ENCODE measurements at regions of chr15 and their contacts with region 1.

Region 1: DNA sequence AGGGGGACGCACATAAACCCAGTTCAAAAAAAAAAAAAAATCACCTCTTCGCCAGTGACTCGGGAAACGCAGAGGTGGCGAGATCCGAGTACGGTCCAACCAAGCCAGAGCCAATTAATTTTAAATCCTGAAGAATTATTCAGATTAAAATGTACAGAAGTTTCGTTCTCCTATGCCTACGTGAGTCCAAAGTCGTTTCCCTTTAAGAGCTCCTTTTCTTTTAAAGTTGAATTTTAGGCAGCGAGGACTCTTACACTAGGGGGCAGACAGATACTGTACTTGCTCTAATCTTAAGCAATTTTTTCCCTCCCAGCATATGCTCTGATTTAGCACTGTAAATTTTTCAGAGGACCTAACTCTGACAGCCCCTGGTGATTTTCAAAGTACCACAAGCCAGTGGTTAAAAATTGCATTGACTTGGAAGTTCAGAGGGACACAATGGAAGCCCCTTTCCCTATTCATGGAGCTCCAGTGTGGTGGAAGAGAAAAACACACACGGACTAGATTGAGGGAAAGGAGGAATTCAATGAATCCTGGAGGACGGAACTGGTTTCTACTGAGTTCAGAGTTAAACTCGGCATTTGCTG is 3.3 kb upstream of the NR2F2 start:
- DNase-seq: no peak
- H3K4me3 ChIP-seq: peak overlapping the region; percentile 77 to 84 (median 80)
- H3K27ac ChIP-seq: peak overlapping the region; percentile 94 to 95 (median 94)
- H3K4me1 ChIP-seq: peaks cover 19 to 46% (median 45%) of the 10 kb centered on the region in 4 donors
- H3K27me3 ChIP-seq: peaks cover 0 to 7% (median 0%) of the 10 kb centered on the region in 4 donors
- CTCF ChIP-seq: peak; percentile 76 to 85 (median 81)
- EP300 ChIP-seq: no peak
- POLR2A ChIP-seq: no peak

Region 2: DNA sequence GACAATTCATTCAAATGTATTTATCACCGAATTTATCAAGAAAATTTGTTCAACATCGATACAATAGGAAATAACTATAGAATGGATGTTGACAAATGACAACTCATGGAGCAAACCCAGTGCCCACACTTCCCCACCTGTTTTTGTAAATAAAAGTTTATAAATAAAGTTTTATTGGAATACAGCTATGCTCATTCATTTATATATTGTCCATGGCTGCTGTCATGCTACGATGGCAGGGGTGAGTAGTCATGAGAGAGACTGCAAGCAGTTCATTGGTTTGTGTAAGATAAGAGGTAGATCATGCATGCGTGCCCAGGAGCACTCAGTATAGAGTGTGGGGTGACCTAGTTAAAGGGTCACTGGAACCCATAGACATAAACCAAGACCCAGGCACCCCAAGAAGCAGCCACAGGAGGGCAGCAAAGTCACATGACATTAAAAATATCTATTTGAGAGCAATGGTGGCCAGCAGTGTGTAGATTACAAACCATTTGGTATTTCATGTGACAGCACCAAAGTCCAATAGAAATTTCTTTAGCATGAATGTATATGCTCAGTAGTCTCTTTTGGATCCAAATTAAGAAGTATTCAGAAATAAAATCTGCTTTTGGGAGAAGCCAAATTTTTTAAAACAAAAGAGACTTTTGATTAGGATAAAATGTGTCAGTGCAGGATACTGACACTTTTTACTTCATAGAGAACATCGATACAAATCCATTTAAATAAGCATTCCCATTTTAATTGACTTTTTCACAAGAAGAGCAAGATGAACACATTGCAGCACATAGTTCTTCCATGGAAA is 1301.1 kb before region 1 on chr15:
- intact Hi-C with region 1: loop called (anchors 10 kb)
- DNase-seq: no peak
- H3K4me3 ChIP-seq: no peak overlapping the region
- H3K27ac ChIP-seq: no peak overlapping the region
- H3K4me1 ChIP-seq: no peaks in the 10 kb centered on the region
- H3K27me3 ChIP-seq: no peaks in the 10 kb centered on the region
- CTCF ChIP-seq: peak; percentile 42 to 58 (median 50)
- EP300 ChIP-seq: no peak
- POLR2A ChIP-seq: no peak

Region 3: GRCh38 chr15:95259513-95259912 is 1067.7 kb before region 1 on chr15:
- intact Hi-C with region 1: loop called (anchors 5 kb)
- DNase-seq: no peak
- H3K4me3 ChIP-seq: no peak overlapping the region
- H3K27ac ChIP-seq: peak overlapping the region in 2 of 4 donors; percentile 14 to 18
- H3K4me1 ChIP-seq: peaks cover 0 to 40% (median 40%) of the 10 kb centered on the region in 4 donors
- H3K27me3 ChIP-seq: no peaks in the 10 kb centered on the region
- CTCF ChIP-seq: peak; percentile 76 to 81 (median 79)
- EP300 ChIP-seq: no peak
- POLR2A ChIP-seq: no peak

Region 4: GRCh38 chr15:95439922-95440376 is 887.3 kb before region 1 on chr15:
- intact Hi-C with region 1: loop called (anchors 10 kb)
- DNase-seq: no peak
- H3K4me3 ChIP-seq: no peak overlapping the region
- H3K27ac ChIP-seq: peak overlapping the region in 3 of 4 donors; percentile 4 to 41 (median 5)
- H3K4me1 ChIP-seq: peaks cover 0 to 24% (median 9%) of the 10 kb centered on the region in 4 donors
- H3K27me3 ChIP-seq: no peaks in the 10 kb centered on the region
- CTCF ChIP-seq: no peak
- EP300 ChIP-seq: no peak
- POLR2A ChIP-seq: no peak

Region 5: GRCh38 chr15:96247621-96248305 is 79.5 kb before region 1 on chr15:
- intact Hi-C with region 1: no loop called
- DNase-seq: no peak
- H3K4me3 ChIP-seq: no peak overlapping the region
- H3K27ac ChIP-seq: no peak overlapping the region
- H3K4me1 ChIP-seq: no peaks in the 10 kb centered on the region
- H3K27me3 ChIP-seq: no peaks in the 10 kb centered on the region
- CTCF ChIP-seq: no peak
- EP300 ChIP-seq: no peak
- POLR2A ChIP-seq: no peak

Region 6: DNA sequence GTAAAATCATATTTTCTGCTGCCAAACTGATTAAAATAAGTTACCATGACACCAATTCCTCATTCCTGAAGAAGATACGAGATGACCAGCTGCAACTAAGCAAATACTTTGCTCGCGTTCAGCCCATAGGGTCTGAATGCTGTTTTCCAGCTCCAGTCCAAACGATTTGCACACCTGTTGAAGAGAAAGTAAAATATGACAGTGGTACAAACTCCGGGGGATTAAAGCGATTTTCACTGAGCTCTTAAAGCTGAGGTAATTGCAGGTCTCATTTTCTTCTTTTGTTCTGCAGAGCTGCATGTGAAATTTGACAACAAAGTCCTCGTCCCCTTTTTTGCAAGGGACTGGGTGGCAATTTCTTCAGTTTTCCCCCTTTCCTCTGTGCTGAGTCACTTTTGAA is 121.7 kb after region 1 on chr15:
- intact Hi-C with region 1: no loop called
- DNase-seq: no peak
- H3K4me3 ChIP-seq: no peak overlapping the region
- H3K27ac ChIP-seq: no peak overlapping the region
- H3K4me1 ChIP-seq: no peaks in the 10 kb centered on the region
- H3K27me3 ChIP-seq: no peaks in the 10 kb centered on the region
- CTCF ChIP-seq: no peak
- EP300 ChIP-seq: no peak
- POLR2A ChIP-seq: no peak

Region 7: DNA sequence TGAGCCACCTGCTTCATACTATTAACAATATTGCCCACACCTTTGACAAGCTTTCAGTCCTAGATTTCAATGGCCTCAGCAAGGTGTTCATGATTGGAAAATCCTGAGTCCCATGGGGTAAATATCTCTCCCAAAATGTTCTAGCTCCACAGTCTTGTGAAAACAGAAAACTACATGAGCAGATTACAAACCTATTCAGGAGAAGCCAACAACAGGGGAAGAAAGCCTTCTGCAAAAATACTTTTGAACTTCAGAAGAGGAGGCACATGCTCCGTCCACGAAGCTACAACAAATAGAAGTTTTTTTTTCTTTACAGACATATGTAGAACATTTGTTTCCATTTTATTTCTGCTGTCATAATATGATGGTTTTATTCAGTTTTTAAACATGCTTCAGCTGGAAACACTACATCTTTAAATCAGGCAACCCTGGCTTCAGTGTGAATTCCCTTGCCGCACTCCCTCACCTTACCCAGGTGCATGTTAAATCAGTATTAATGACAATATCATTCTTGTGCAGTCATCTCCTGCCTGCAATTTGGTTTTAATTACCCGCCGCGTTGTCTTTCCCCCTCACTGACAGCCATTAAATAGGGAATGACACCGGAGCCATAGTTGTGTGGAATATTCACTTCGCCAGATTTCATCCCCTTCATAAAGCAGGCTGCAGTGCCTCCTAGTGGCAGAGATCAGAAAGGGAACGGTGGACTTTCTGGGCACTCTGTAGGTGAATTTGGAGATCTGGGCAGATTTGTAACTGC is 907.8 kb after region 1 on chr15:
- intact Hi-C with region 1: loop called (anchors 10 kb)
- DNase-seq: peak; percentile 92
- H3K4me3 ChIP-seq: peak overlapping the region in 3 of 4 donors; percentile 7 to 29 (median 8)
- H3K27ac ChIP-seq: no peak overlapping the region
- H3K4me1 ChIP-seq: peaks cover 0 to 8% (median 2%) of the 10 kb centered on the region in 4 donors
- H3K27me3 ChIP-seq: no peaks in the 10 kb centered on the region
- CTCF ChIP-seq: peak; percentile 81 to 92 (median 84)
- EP300 ChIP-seq: no peak
- POLR2A ChIP-seq: no peak

Measured in esophagus muscularis mucosa (tissue), 4 donors.